ENCODE measurements at regions of chr3 and their contacts with region 1.

Region 1: DNA sequence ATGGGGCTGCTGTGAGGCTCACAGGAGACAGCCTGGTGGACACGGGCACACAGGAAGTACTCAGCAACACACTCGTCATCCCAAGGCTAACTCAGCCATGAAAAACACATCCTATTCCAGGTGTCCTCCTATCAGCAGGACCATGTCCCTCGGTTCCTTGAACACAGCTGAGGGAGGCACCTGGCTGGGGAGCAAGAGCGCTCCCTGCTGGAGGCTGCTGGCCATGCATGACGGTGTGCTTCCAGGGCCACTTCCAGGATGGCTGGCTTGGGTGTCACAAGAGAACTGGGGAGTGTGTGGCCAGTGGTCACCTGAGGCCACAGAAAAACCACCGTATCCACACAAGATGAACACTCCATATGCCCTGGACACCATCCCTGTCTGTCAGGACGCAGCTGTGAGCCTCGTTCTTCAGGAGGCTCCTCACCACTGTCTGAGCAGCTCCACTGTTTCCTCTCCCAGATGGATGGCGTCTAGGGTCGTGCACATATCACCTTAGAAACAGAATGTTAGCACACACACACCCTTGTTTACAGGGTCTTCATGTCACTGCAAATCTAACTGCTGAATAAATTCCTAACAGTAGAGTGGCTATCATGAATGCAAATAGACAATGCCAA is 31.0 kb downstream of the POC1A start:
- DNase-seq: peak; percentile 83
- ATAC-seq: peak; percentile 93
- H3K4me3 Mint-ChIP-seq: no peak overlapping the region
- H3K27ac Mint-ChIP-seq: no peak overlapping the region
- H3K4me1 Mint-ChIP-seq: peaks cover 6% of the 10 kb centered on the region
- H3K27me3 Mint-ChIP-seq: no peaks in the 10 kb centered on the region

Region 2: GRCh38 chr3:52001443-52001974 is 121.7 kb before region 1 on chr3:
- CTCF ChIA-PET with region 1: interaction called, 76 read pairs
- POLR2A ChIA-PET with region 1: no interaction called
- intact Hi-C with region 1: loop called (anchors 1 kb)
- DNase-seq: peak; percentile 91
- ATAC-seq: peak; percentile 97
- H3K4me3 Mint-ChIP-seq: no peak overlapping the region
- H3K27ac Mint-ChIP-seq: no peak overlapping the region
- H3K4me1 Mint-ChIP-seq: peaks cover 16% of the 10 kb centered on the region
- H3K27me3 Mint-ChIP-seq: no peaks in the 10 kb centered on the region

Region 3: DNA sequence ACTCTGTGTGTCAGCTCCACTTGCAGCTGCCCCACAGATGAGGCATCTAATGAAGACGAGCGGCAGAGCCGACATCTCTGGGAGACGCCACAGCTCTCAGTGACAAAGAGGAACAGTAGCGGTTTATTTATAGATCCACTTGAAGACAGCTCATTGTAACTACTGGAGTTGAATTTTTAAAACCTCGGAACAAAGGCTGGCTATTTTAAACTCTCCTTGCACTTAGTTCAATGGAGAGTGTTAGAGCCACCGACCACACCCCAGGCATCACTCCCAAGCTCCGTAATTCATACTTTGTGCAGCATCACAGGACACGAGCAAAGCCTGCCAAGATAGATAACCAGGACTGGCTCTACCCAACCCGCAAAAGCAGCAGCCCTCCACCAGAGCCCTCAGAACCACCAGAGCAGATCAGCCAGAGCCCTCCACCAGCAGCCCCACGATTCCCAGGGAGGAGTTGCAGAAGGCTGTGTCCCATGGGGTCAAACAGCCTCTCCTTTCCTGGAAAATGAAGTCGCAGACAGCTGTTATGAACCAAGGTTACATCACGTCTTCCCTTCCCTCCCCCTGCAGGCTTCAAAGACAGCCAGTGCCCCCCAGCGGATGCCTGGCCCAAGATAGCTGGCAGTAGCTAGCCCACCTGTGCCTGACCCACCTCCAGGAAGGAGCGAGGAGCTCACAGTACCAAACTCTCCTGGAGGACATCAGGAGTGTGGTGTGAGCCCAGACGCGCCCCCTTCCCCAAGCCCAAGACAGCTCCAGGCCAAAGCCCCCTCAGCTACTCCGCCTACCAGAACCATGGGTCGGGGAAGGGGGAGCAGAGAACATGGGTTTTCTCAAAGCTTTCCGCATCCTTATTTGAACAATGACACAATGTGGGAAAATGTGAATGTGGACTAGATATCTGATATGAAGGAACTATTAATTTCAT is 14.6 kb before region 1 on chr3:
- CTCF ChIA-PET with region 1: interaction called, 20 read pairs
- POLR2A ChIA-PET with region 1: no interaction called
- intact Hi-C with region 1: no loop called
- DNase-seq: no peak
- ATAC-seq: no peak
- H3K4me3 Mint-ChIP-seq: no peak overlapping the region
- H3K27ac Mint-ChIP-seq: no peak overlapping the region
- H3K4me1 Mint-ChIP-seq: no peaks in the 10 kb centered on the region
- H3K27me3 Mint-ChIP-seq: no peaks in the 10 kb centered on the region

Region 4: DNA sequence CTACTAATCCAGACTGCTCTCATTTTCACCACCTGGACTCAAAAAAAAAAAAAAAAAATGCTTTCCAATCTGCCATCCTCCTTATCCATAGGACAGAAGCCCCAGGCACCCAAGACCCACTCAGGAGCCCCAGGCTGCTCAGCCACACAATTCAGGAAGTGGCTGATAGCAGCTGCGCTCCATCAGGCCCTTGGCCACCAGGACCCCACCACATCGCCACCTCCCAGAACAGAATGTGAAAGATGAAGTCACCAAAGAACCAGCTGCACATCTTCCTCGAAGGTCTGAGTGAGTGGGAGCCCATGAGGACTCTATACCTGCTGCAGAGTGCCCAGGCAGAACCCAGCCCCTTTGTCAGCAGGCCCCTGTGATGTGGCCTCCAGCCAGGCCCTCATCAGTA is 11.5 kb after region 1 on chr3:
- CTCF ChIA-PET with region 1: interaction called, 10 read pairs
- POLR2A ChIA-PET with region 1: no interaction called
- intact Hi-C with region 1: no loop called
- DNase-seq: no peak
- ATAC-seq: no peak
- H3K4me3 Mint-ChIP-seq: no peak overlapping the region
- H3K27ac Mint-ChIP-seq: no peak overlapping the region
- H3K4me1 Mint-ChIP-seq: no peaks in the 10 kb centered on the region
- H3K27me3 Mint-ChIP-seq: no peaks in the 10 kb centered on the region

Region 5: GRCh38 chr3:52162250-52162872 is 39.1 kb after region 1 on chr3:
- CTCF ChIA-PET with region 1: no interaction called
- POLR2A ChIA-PET with region 1: no interaction called
- intact Hi-C with region 1: no loop called
- DNase-seq: no peak
- ATAC-seq: no peak
- H3K4me3 Mint-ChIP-seq: no peak overlapping the region
- H3K27ac Mint-ChIP-seq: no peak overlapping the region
- H3K4me1 Mint-ChIP-seq: no peaks in the 10 kb centered on the region
- H3K27me3 Mint-ChIP-seq: no peaks in the 10 kb centered on the region

Region 6: DNA sequence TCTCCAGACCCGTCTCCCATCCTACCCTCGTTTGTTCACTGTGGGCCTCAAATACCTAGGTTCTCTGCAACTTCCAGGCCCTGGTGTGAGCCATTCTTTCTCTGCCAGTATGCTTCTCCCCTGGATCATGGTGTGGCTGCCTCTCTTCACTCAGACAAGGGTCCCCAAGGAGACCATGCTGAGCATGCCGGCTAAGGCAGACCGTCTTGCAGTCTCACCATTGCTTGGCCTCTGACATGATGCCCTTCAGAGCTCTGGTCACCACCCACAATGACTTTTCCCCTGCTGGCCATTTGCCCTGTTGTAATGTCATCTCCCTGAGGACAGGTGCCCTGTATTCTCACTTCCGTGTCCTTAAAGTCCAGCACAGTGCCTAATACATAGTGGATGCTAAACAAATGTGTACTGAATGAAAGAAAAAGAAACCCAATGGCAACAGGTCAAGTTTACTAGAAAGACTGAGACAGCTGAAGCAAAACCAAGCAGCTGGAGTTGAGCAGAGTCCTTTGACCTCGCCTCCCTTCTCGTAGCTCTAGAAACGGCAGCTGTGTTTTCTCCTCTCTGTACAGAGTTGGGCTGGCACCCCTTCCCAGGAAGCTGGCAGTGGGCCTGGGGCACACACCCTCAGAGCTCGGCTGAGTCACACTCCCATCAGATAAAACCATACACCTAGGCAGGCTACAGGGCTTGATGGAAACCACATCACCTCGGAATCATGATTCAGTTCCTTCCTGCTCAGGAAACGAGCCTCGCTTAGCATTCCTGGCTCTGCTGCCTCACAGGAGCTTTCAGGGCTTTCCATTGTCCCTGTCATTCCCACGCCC is 93.6 kb after region 1 on chr3:
- CTCF ChIA-PET with region 1: no interaction called
- POLR2A ChIA-PET with region 1: no interaction called
- intact Hi-C with region 1: no loop called
- DNase-seq: peak; percentile 66
- ATAC-seq: peak; percentile 68
- H3K4me3 Mint-ChIP-seq: peak overlapping the region; percentile 21
- H3K27ac Mint-ChIP-seq: peak overlapping the region; percentile 85
- H3K4me1 Mint-ChIP-seq: peaks cover 48% of the 10 kb centered on the region
- H3K27me3 Mint-ChIP-seq: no peaks in the 10 kb centered on the region

Region 7: DNA sequence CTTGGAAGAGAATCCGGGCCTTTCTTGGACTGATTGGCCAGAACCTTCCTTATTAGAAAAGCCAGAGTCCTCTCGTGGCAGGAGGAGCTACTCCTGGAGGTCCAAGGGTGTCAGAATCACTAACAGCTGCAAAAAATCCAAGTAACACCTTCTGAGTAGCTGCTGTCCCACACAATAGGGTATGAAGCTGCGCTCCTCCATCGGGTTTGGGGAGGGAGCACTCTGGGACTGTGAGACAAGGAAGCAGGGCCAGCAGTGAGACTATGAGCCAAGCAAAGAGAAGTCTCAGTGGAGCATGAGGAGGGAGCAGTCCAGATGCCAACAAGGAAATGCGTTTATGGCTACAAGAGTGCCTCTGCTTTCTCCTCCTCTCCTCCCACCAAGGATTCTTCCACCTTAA is 300.0 kb after region 1 on chr3:
- CTCF ChIA-PET with region 1: no interaction called
- POLR2A ChIA-PET with region 1: no interaction called
- intact Hi-C with region 1: no loop called
- DNase-seq: no peak
- ATAC-seq: no peak
- H3K4me3 Mint-ChIP-seq: no peak overlapping the region
- H3K27ac Mint-ChIP-seq: no peak overlapping the region
- H3K4me1 Mint-ChIP-seq: no peaks in the 10 kb centered on the region
- H3K27me3 Mint-ChIP-seq: no peaks in the 10 kb centered on the region